Posterior vena cava (tissue), 2 donors: ENCODE measurements at regions of chr6 and their contacts with region 1.

Region 1: DNA sequence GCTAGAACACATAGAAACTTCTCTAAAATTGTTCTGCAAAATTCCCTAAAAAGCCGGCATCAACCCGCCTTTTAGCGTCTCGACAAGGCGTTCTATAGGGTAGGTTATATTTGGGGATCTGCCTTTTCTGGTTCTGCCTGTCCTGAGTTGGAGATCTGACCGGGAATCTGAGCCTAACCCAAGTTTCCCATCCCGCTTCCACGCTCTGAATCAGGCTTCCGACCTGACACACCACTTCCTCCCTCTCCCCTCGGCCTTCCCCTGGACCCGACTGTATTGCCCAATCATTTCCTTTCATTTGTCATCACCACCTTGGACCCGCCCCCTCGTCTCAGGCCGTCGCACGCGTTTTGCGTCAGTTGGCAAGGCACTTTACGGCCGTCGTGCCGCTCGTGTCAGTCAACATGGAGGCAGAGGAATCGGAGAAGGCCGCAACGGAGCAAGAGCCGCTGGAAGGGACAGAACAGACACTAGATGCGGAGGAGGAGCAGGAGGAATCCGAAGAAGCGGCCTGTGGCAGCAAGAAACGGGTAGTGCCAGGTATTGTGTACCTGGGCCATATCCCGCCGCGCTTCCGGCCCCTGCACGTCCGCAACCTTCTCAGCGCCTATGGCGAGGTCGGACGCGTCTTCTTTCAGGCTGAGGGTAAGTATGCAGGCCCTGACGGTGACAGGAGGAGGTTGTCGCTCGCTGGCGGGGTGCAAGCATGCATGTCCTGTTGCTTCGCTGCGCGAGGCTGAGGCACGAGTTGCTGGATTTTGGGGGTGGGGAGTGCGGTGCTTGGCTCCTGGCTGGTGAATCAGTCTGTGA is at the start of gene ABT1:
- DNase-seq: peak; percentile 99
- total RNA-seq, gene ABT1: 10.3 to 11.5 TPM

Region 2: DNA sequence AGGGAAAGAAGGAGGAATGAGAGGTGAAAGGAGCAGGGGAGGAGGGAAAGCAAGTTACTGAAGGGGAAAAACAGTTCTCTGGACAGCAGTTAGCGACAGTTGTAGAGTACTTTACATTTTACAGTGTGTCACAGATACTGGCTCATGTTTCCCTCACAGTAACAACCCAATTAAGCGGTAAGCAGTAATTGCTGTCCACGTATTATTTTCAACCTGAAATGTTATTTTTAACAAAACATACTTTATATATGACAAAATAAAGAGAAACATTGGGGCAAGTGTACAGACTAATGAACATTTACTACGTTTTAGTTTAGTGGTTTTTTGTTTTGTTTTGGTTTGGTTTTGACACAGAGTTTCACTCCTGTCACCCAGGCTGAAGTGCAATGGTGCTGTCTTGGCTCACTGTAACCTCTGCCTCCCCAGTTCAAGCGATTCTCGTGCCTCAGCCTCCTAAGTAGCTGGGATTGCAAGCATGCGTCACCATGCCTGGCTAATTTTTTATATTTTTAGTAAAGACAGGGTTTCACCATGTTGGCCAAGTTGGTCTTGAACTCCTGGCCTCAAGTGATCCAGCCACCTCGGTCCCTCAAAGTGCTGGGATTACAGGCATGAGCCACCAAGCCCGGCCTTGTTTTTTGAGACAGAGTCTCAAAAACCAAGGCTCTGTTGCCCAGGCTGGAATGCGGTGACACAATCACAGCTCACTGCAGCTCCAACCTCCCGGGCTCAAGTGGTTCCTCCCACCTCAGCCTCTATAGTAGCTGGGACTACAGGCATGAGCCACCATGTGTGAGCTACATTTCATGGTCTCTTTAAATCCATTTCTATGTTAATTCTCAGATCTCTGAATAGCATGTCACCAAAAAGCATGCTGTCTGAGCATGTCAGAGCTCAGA is 254.4 kb before region 1 on chr6:
- intact Hi-C with region 1: loop called in 1 of 2 experiments (anchors 5 kb)
- DNase-seq: no peak

Region 3: DNA sequence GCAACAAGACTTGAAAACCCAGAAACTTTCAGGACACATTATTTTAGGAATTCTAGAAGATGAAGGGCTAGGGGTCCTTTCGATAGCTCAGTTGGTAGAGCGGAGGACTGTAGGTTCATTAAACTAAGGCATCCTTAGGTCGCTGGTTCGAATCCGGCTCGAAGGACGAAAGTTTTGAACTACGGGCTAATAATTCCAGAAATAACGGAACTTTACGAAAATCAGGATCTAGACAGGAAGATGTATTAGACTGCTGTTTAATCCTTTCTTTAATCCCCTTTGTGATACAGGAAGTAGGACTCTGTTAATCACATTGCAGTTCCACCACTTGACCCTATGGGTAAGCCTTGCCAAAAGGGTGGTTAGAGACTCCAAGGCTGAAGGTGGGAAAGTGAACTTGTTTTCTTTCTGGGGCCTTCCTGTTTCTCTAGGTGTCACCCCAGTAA is 21.3 kb before region 1 on chr6:
- intact Hi-C with region 1: loop called in 1 of 2 experiments (anchors 2 kb)
- DNase-seq: no peak